GM12878 (cell line): ENCODE measurements at regions of chr7 and their contacts with region 1.

Region 1: DNA sequence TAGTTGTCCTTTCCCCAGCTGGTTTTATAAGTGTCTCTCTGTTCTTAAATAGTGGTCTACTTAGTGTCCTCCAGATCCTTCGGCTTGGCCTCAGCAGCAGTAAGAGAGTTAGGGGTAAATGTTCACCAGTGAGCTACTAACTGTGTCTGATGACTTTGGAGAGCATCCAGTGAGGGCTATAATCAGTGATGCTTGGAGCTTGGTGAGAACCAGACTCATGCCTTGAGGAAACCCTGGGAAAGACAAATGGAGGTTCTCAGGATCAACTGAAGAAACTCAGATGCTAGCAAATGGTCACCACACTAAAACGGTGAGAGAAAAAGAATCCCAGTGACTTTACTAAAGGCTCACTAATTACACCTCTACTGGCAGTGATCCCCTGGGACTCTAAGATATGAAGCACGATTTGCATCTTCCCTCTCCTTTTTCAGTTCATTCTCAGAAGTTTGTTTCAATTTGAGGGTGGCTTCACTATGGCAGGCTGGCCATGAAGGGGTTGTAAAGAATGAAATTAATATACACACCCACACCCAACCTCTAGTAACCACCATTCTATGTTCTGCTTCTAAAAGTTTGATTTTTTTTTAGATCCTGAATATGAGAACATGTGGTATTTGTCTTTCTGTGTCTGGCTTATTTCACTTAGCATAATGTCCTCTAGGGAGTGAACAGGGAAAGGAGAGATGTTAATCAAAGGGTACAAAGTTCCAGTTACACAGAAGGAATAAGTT is 177.9 kb downstream of the PDE1C start:
- DNase-seq: peak; percentile 90
- ATAC-seq: peak; percentile 93
- H3K4me3 ChIP-seq: no peak overlapping the region
- H3K27ac ChIP-seq: peak overlapping the region; percentile 53; the same call in 1 of the 2 replicates
- H3K4me1 ChIP-seq: peaks cover 25% of the 10 kb centered on the region
- H3K27me3 ChIP-seq: no peaks in the 10 kb centered on the region; a peak in 1 of 4 replicates
- CTCF ChIP-seq: no peak
- EP300 ChIP-seq: peak in 1 of 2 experiments; percentile 63; a peak in 1 of 4 replicates
- POLR2A ChIP-seq: no peak
- RAD21 ChIP-seq: no peak

Region 2: DNA sequence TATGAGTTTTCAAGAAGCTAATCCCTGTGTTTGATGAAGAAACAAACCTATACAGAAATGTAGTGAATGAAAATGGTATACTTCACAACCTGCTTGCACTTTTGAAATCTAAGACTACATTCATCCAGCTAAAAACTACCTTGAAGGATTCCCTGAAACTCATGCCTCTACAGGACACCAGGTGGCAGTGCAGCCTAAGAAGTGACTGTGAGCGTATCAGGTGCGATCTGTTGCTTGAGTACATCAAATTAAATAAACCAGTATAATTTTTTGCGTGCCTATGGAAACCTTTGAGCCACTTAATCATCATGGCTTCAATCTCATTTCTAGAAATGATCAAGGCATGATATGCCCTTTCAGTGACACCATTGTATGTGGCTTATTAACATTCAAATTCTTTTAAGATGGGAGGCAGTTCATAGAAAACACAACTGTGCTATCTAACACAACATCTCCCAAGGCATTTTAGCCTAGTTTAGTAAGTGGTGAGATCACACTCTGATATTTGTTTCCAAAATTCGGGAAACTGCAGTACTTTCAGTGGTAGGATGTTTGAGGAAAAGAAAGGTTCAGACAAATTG is 147.9 kb before region 1 on chr7:
- CTCF ChIA-PET with region 1: no interaction called
- POLR2A ChIA-PET with region 1: no interaction called
- RAD21 ChIA-PET with region 1: no interaction called
- SMC1A ChIA-PET with region 1: no interaction called
- in situ Hi-C with region 1: no loop called
- intact Hi-C with region 1: no loop called
- DNase-seq: peak; percentile 33
- ATAC-seq: peak; percentile 89
- H3K4me3 ChIP-seq: no peak overlapping the region
- H3K27ac ChIP-seq: no peak overlapping the region
- H3K4me1 ChIP-seq: no peaks in the 10 kb centered on the region
- H3K27me3 ChIP-seq: no peaks in the 10 kb centered on the region
- CTCF ChIP-seq: peak; percentile 76 to 88 (median 83)
- EP300 ChIP-seq: no peak
- POLR2A ChIP-seq: no peak
- RAD21 ChIP-seq: peak; percentile 98

Region 3: GRCh38 chr7:31788445-31788844 is 103.8 kb before region 1 on chr7:
- CTCF ChIA-PET with region 1: interaction called, 17 read pairs
- POLR2A ChIA-PET with region 1: no interaction called
- RAD21 ChIA-PET with region 1: no interaction called
- SMC1A ChIA-PET with region 1: interaction called, 11 read pairs
- in situ Hi-C with region 1: no loop called
- intact Hi-C with region 1: loop called (anchors 1 kb)
- DNase-seq: no peak
- ATAC-seq: peak; percentile 81
- H3K4me3 ChIP-seq: no peak overlapping the region
- H3K27ac ChIP-seq: no peak overlapping the region
- H3K4me1 ChIP-seq: no peaks in the 10 kb centered on the region
- H3K27me3 ChIP-seq: no peaks in the 10 kb centered on the region
- CTCF ChIP-seq: no peak
- EP300 ChIP-seq: peak in 1 of 2 experiments; percentile 21; a peak in 1 of 4 replicates
- POLR2A ChIP-seq: no peak
- RAD21 ChIP-seq: no peak

Region 4: DNA sequence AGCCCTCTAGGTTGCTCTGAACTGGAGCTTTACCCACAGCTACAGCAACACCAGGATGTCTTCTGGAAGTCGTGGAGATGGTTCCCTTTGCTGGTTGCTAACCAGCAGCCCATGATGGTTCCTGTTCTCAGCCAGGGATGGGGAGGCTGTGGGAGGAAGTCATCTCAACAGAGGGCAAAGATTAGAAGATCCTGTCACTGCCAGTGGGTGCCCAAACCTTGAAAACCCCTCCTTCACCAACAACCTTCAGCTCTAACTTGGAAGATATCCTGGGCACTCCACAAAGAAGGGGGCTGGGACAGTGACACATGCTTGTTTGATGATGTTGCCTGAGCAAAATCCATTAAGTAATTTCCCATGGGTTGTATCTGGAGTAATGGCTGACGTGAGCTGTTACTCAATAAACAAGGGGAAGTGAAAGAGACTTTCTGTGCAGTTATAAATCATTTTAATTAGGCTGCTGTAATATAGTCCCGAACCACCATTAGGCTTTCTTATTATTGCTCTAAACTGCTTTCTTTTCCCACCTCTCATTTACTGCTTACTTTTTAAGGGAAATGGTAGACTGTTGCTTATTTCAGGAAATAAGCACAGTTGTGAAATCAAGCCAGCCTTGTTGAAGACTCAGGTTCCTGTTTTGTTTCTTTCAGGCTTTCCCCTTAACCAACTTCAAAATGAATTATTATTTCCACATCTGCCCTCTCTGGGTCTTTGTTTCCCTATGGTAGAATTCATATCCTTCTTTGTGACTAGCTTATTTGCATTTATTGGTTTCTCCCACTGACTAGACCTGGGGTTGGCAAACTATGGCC is 80.4 kb before region 1 on chr7:
- CTCF ChIA-PET with region 1: interaction called, 4 read pairs
- POLR2A ChIA-PET with region 1: no interaction called
- RAD21 ChIA-PET with region 1: interaction called, 7 read pairs
- SMC1A ChIA-PET with region 1: interaction called, 10 read pairs
- in situ Hi-C with region 1: no loop called
- intact Hi-C with region 1: loop called (anchors 1 kb)
- DNase-seq: peak; percentile 58
- ATAC-seq: peak; percentile 93
- H3K4me3 ChIP-seq: no peak overlapping the region
- H3K27ac ChIP-seq: no peak overlapping the region
- H3K4me1 ChIP-seq: no peaks in the 10 kb centered on the region
- H3K27me3 ChIP-seq: no peaks in the 10 kb centered on the region
- CTCF ChIP-seq: no peak
- EP300 ChIP-seq: peak; percentile 83 to 95
- POLR2A ChIP-seq: no peak
- RAD21 ChIP-seq: no peak

Region 5: GRCh38 chr7:31828520-31828919 is 63.7 kb before region 1 on chr7:
- CTCF ChIA-PET with region 1: interaction called, 3 read pairs
- POLR2A ChIA-PET with region 1: no interaction called
- RAD21 ChIA-PET with region 1: interaction called, 5 read pairs
- SMC1A ChIA-PET with region 1: interaction called, 7 read pairs
- in situ Hi-C with region 1: no loop called
- intact Hi-C with region 1: loop called (anchors 5 kb)
- DNase-seq: no peak
- ATAC-seq: peak; percentile 46
- H3K4me3 ChIP-seq: no peak overlapping the region
- H3K27ac ChIP-seq: no peak overlapping the region
- H3K4me1 ChIP-seq: no peaks in the 10 kb centered on the region
- H3K27me3 ChIP-seq: no peaks in the 10 kb centered on the region
- CTCF ChIP-seq: no peak
- EP300 ChIP-seq: no peak
- POLR2A ChIP-seq: no peak
- RAD21 ChIP-seq: no peak

Region 6: DNA sequence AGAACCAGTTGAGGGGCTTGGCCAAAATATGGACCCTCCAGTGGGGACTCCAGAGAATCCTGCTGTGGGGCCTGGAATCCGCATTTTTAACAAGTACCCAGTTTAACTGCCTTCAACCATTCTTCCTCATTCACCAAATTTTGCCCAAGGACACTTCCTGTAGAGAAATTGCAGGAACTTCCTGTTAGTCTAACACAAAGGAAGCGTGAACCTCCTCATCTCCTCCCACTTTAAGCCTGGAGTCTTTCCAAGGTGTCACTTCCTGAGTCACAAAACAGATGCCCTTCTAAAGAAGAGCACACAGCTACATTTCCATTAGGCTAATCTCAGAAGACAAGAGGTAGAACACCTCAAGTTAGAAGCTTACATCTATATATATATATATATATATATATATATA is 16.8 kb before region 1 on chr7:
- CTCF ChIA-PET with region 1: interaction called, 5 read pairs
- POLR2A ChIA-PET with region 1: no interaction called
- RAD21 ChIA-PET with region 1: interaction called, 14 read pairs
- SMC1A ChIA-PET with region 1: interaction called, 66 read pairs
- in situ Hi-C with region 1: no loop called
- intact Hi-C with region 1: loop called (anchors 1 kb)
- DNase-seq: no peak
- ATAC-seq: no peak
- H3K4me3 ChIP-seq: no peak overlapping the region
- H3K27ac ChIP-seq: no peak overlapping the region
- H3K4me1 ChIP-seq: 0 out of 2 replicates have a peak, but pooled peaks cover 4% of the 10 kb centered on the region
- H3K27me3 ChIP-seq: no peaks in the 10 kb centered on the region
- CTCF ChIP-seq: no peak
- EP300 ChIP-seq: no peak
- POLR2A ChIP-seq: no peak
- RAD21 ChIP-seq: no peak

Region 7: GRCh38 chr7:31910191-31910590 is 17.9 kb after region 1 on chr7:
- CTCF ChIA-PET with region 1: no interaction called
- POLR2A ChIA-PET with region 1: no interaction called
- RAD21 ChIA-PET with region 1: no interaction called
- SMC1A ChIA-PET with region 1: no interaction called
- in situ Hi-C with region 1: no loop called
- intact Hi-C with region 1: no loop called
- DNase-seq: no peak
- ATAC-seq: no peak
- H3K4me3 ChIP-seq: no peak overlapping the region
- H3K27ac ChIP-seq: no peak overlapping the region
- H3K4me1 ChIP-seq: no peaks in the 10 kb centered on the region
- H3K27me3 ChIP-seq: no peaks in the 10 kb centered on the region
- CTCF ChIP-seq: no peak
- EP300 ChIP-seq: no peak
- POLR2A ChIP-seq: no peak
- RAD21 ChIP-seq: no peak

Region 8: GRCh38 chr7:31948029-31948428 is 55.8 kb after region 1 on chr7:
- CTCF ChIA-PET with region 1: interaction called, 5 read pairs
- POLR2A ChIA-PET with region 1: interaction called, 3 read pairs
- RAD21 ChIA-PET with region 1: interaction called, 5 read pairs
- SMC1A ChIA-PET with region 1: interaction called, 22 read pairs
- in situ Hi-C with region 1: no loop called
- intact Hi-C with region 1: no loop called
- DNase-seq: no peak
- ATAC-seq: peak; percentile 80
- H3K4me3 ChIP-seq: no peak overlapping the region
- H3K27ac ChIP-seq: no peak overlapping the region
- H3K4me1 ChIP-seq: no peaks in the 10 kb centered on the region
- H3K27me3 ChIP-seq: no peaks in the 10 kb centered on the region
- CTCF ChIP-seq: no peak
- EP300 ChIP-seq: no peak
- POLR2A ChIP-seq: no peak
- RAD21 ChIP-seq: no peak

Region 9: DNA sequence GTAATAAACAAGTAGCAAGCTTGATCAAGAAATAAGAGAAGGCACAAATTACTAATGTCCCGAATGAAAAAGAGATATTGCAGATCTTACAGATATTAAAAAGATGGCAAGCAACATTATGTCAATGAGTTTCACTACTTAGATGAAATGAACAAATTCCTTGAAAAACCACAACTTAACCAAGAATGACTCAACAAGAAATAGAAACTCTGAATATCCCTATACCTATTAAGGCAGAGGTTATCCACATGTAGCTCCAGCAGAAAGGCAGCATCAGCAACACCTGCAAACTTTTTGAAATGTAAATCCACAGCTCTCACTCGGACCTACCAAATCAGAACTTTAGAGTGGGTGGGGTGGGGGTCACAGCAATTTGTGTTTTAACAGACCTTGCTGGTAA is 144.3 kb after region 1 on chr7:
- CTCF ChIA-PET with region 1: no interaction called
- POLR2A ChIA-PET with region 1: interaction called, 3 read pairs
- RAD21 ChIA-PET with region 1: interaction called, 8 read pairs
- SMC1A ChIA-PET with region 1: interaction called, 6 read pairs
- in situ Hi-C with region 1: no loop called
- intact Hi-C with region 1: loop called (anchors 1 kb)
- DNase-seq: no peak
- ATAC-seq: peak; percentile 68
- H3K4me3 ChIP-seq: no peak overlapping the region
- H3K27ac ChIP-seq: no peak overlapping the region
- H3K4me1 ChIP-seq: no peaks in the 10 kb centered on the region
- H3K27me3 ChIP-seq: peaks cover 1 to 3% of the 10 kb centered on the region in 2 experiments; a peak in 1 of 4 replicates
- CTCF ChIP-seq: no peak
- EP300 ChIP-seq: no peak
- POLR2A ChIP-seq: no peak
- RAD21 ChIP-seq: no peak

Region 10: DNA sequence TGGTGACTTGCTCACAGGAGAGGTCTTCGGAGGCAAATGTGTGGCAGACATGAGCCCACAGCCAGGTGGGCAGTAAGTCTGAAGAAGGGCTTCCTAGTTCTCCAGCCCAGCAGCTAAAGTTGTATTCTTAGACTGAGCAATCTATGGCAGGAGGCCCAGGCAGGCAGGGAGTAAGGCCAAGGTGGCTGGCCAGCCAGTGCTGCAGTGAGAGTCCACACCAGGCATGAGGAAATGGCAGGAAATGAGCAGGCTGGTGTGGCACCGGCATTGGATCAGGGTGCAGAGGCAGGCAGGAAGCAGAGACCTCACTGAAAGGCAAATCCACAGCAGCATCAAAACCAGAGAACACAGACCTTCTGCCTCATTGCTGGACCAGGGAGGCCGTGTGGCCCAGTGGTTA is 262.5 kb after region 1 on chr7:
- CTCF ChIA-PET with region 1: no interaction called
- POLR2A ChIA-PET with region 1: no interaction called
- RAD21 ChIA-PET with region 1: no interaction called
- SMC1A ChIA-PET with region 1: no interaction called
- in situ Hi-C with region 1: no loop called
- intact Hi-C with region 1: no loop called
- DNase-seq: no peak
- ATAC-seq: no peak
- H3K4me3 ChIP-seq: no peak overlapping the region
- H3K27ac ChIP-seq: no peak overlapping the region
- H3K4me1 ChIP-seq: no peaks in the 10 kb centered on the region
- H3K27me3 ChIP-seq: peaks cover 0 to 2% of the 10 kb centered on the region in 2 experiments; a peak in 1 of 4 replicates
- CTCF ChIP-seq: no peak
- EP300 ChIP-seq: no peak
- POLR2A ChIP-seq: no peak
- RAD21 ChIP-seq: no peak

Region 11: DNA sequence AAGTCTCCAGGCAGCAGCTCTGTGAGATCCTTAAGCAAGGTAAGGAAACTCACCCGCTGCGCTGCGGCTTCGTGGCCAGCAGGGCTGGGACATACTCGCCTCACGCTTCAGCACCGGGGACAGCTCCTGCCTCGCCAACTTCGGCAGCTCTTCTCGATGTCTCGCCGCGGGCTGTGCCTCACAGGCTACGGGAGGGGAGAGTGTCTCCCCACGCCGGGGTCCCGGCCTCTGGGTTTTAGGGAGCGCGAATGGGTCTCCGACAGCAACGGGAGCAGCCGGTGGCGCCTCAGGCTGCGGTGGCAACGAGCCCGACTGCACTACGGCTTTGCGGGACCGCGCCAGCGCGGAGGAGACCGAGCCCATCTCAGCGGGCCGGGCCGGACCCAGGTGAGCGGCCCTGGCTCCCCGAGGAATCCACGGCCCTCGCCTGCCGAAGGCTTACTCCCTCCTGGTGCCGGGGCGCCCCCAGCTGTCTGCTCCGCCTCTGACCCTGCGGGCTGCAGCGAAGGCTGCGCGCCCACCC is 535.6 kb after region 1 on chr7:
- CTCF ChIA-PET with region 1: no interaction called
- POLR2A ChIA-PET with region 1: no interaction called
- RAD21 ChIA-PET with region 1: no interaction called
- SMC1A ChIA-PET with region 1: no interaction called
- in situ Hi-C with region 1: no loop called
- intact Hi-C with region 1: no loop called
- DNase-seq: no peak
- ATAC-seq: peak; percentile 58
- H3K4me3 ChIP-seq: no peak overlapping the region
- H3K27ac ChIP-seq: no peak overlapping the region
- H3K4me1 ChIP-seq: no peaks in the 10 kb centered on the region
- H3K27me3 ChIP-seq: no peaks in the 10 kb centered on the region
- CTCF ChIP-seq: 0 out of 6 replicates have a peak, but pooled peaks of 1 of the 3 experiments have one; percentile 8
- EP300 ChIP-seq: no peak
- POLR2A ChIP-seq: no peak
- RAD21 ChIP-seq: no peak